SK-N-SH (cell line): ENCODE measurements at regions of chr10 and their contacts with region 1.

Region 1: GRCh38 chr10:93554760-93555432 is 11.6 kb upstream of the FFAR4 start:
- DNase-seq: peak; percentile 79
- H3K4me3 ChIP-seq: no peak overlapping the region
- H3K27ac ChIP-seq: no peak overlapping the region
- H3K4me1 ChIP-seq: no peaks in the 10 kb centered on the region
- H3K27me3 ChIP-seq: no peaks in the 10 kb centered on the region
- CTCF ChIP-seq: peak; percentile 67
- EP300 ChIP-seq: no peak
- RAD21 ChIP-seq: peak; percentile 72

Region 2: GRCh38 chr10:93541402-93542357 is 13.2 kb before region 1 on chr10:
- CTCF ChIA-PET with region 1: interaction called, 31 read pairs
- POLR2A ChIA-PET with region 1: no interaction called
- DNase-seq: peak; percentile 67
- H3K4me3 ChIP-seq: peak overlapping the region; percentile 25 to 39
- H3K27ac ChIP-seq: no peak overlapping the region
- H3K4me1 ChIP-seq: peaks cover 0 to 8% of the 10 kb centered on the region in 2 experiments; a peak in 1 of 4 replicates
- H3K27me3 ChIP-seq: no peaks in the 10 kb centered on the region
- CTCF ChIP-seq: peak; percentile 94
- EP300 ChIP-seq: no peak
- RAD21 ChIP-seq: peak; percentile 67

Region 3: GRCh38 chr10:93566435-93567276 is 11.8 kb after region 1 on chr10 and contains the start of gene FFAR4:
- CTCF ChIA-PET with region 1: interaction called, 33 read pairs
- POLR2A ChIA-PET with region 1: no interaction called
- DNase-seq: peak; percentile 53
- H3K4me3 ChIP-seq: no peak within 1 kb of the TSS
- H3K27ac ChIP-seq: no peak within 1 kb of the TSS
- H3K4me1 ChIP-seq: no peaks in the 10 kb centered on the region; a peak in 1 of 4 replicates
- H3K27me3 ChIP-seq: peaks cover 46% of the 10 kb centered on the region; the same call in 1 of the 2 replicates
- CTCF ChIP-seq: no peak
- EP300 ChIP-seq: no peak
- RAD21 ChIP-seq: no peak
- polyA plus RNA-seq, gene FFAR4: not detected in 2 replicates

Region 4: DNA sequence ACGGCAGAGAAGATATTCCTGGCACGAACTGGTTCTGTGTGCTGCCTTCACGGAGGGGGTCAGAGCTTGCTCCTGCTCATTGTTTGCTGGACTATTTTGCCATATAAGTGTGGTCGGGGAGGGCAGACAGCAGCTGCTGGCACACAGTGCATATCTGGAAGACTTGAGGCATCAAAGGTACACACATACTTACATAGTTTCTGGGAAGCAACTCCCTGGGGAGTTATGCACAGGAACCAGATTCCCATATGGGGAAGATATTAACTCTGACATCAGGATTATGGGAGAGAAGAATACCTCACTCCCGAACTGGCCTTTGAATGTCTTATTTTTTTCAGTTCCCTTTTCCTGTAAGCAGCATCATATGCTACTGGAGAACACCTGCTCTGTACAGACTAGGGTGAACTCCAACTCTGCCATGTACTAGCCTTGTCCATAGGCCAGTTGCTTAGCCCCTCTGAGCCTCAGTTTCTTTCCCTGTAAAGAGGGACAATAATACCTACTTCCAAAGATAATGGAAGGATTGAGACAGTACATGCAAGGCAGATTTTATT is 244.3 kb after region 1 on chr10:
- CTCF ChIA-PET with region 1: no interaction called
- POLR2A ChIA-PET with region 1: no interaction called
- DNase-seq: no peak
- H3K4me3 ChIP-seq: no peak overlapping the region
- H3K27ac ChIP-seq: no peak overlapping the region
- H3K4me1 ChIP-seq: no peaks in the 10 kb centered on the region; a peak in 1 of 4 replicates
- H3K27me3 ChIP-seq: no peaks in the 10 kb centered on the region; the same call in 1 of the 2 replicates
- CTCF ChIP-seq: no peak
- EP300 ChIP-seq: no peak
- RAD21 ChIP-seq: no peak